Activated CD4-positive, alpha-beta memory T cell treated with anti-CD3 and anti-CD28 coated beads, Interleukin-2, amount 10 ng/mL, durations not matched to agents 7 days and 5 days (primary cell): ENCODE measurements at regions of chr6 and their contacts with region 1.

Region 1: GRCh38 chr6:10722820-10723566 is at the start of gene TMEM14C:
- DNase-seq: peak; percentile 87
- H3K4me3 Mint-ChIP-seq: peak within 1 kb of the TSS; percentile 95
- H3K27ac Mint-ChIP-seq: peak within 1 kb of the TSS; percentile 88
- H3K4me1 Mint-ChIP-seq: peaks cover 55% of the 10 kb centered on the region
- H3K27me3 Mint-ChIP-seq: no peaks in the 10 kb centered on the region
- total RNA-seq, gene TMEM14C: 42.4 to 46.5 TPM

Region 2: DNA sequence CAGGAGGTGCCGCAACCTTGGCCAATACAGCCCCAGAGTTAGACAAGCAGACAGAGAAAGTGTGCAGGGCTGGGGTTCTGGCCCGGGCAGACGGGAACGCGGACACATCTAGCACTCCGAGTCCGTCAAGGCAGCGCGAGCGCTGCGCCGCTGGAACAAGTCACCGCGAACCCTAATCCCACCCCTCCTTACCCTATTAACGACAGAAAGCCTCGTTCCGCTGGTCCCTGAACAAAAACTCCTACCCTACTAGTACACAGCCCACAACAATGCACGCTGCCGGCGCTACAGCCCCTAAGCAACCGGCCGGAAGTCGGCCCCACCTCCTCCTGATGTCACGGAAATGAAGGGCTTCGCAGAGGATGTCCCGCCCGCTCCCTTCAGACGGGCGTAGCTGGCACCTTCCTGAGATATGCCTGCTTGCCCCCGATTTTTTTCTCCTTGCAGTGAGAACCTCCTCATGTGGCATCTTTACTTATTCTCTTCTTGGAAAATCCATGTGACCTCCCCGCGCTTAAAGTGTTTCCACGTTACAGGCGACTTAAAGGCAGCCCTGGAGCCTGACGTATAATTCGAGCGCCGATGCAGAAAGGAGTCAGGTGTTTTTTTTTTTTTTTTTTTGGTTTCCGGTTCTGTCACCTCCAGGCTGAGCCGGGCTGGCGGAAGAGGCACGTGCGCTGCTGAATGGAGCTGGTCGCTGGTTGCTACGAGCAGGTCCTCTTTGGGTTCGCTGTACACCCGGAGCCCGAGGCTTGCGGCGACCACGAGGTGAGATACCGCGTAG is 28.5 kb before region 1 on chr6 and contains the starts of genes C6orf52 and PAK1IP1:
- CTCF ChIA-PET with region 1: interaction called, 12 read pairs
- POLR2A ChIA-PET with region 1: interaction called, 79 read pairs
- DNase-seq: peak; percentile 94
- H3K4me3 Mint-ChIP-seq: peak within 1 kb of the TSS; percentile 86
- H3K27ac Mint-ChIP-seq: peak within 1 kb of the TSS; percentile 98
- H3K4me1 Mint-ChIP-seq: peaks cover 42% of the 10 kb centered on the region
- H3K27me3 Mint-ChIP-seq: no peaks in the 10 kb centered on the region
- total RNA-seq, gene C6orf52: 0.88 to 1.6 TPM
- total RNA-seq, gene PAK1IP1: 10.1 to 10.9 TPM